ENCODE measurements at regions of chr3 and their contacts with region 1.

Region 1: DNA sequence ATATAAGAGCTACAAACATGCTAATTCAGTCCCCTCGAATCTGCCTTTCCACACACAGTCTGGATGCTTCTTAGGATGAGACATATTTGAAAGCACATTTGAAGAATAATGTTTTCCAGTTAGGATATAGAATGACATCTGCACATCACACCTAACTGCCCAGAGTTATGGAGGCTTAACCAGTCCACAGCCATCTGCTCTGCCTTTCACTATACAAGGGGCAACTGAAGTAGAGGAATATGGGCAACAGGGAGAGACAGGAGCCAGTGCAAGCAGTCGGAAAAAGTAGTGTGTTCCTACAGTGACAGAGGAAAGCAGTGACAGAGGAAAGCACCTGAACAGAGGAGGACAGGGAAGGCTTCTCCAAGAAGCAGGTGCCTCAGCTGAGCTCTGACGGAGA is 79.0 kb upstream of the CLDN18 start:
- DNase-seq: no peak
- ATAC-seq: no peak
- H3K4me3 ChIP-seq: no peak overlapping the region
- H3K4me3 Mint-ChIP-seq: no peak overlapping the region
- H3K27ac ChIP-seq: no peak overlapping the region
- H3K27ac Mint-ChIP-seq: no peak overlapping the region
- H3K4me1 ChIP-seq: no peaks in the 10 kb centered on the region
- H3K4me1 Mint-ChIP-seq: no peaks in the 10 kb centered on the region
- H3K27me3 ChIP-seq: no peaks in the 10 kb centered on the region
- H3K27me3 Mint-ChIP-seq: peaks cover 2 to 24% of the 10 kb centered on the region in 2 donors

Region 2: DNA sequence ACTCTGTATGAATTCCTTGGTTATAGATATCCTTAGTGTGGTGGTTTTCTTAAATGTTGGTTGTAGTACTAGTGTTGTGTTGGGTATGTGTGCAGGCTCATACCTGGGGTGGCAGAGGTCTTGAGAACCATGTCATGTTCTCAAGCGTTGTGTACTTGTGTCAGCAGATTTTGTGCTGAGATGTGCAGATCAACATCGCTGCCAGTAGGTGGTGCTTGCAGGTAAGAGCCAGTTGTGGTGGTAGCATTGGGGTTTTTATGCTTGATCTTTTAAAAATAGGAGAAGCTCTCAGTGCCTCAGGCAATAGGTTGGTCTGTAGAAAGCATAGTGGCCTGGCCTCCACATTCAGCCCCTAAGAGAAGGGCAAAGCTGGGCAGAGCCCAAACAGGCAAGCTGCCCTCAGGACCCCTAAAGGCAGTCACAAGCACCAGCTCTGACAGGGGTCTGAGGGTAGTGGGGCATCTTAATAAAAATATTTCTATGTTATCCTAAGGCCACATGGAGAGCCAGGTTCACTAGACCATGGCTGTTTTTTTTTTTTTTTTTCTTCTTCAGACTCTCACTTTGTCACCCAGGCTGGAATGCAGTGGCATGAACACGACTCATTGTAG is 809.2 kb before region 1 on chr3:
- CTCF ChIA-PET with region 1: interaction called in 1 of 2 experiments, 10 read pairs
- POLR2A ChIA-PET with region 1: no interaction called
- DNase-seq: peak in 6 of 35 experiments; percentile 1 to 31 (median 6)
- ATAC-seq: no peak
- H3K4me3 ChIP-seq: no peak overlapping the region
- H3K4me3 Mint-ChIP-seq: no peak overlapping the region
- H3K27ac ChIP-seq: no peak overlapping the region
- H3K27ac Mint-ChIP-seq: no peak overlapping the region
- H3K4me1 ChIP-seq: no peaks in the 10 kb centered on the region
- H3K4me1 Mint-ChIP-seq: no peaks in the 10 kb centered on the region
- H3K27me3 ChIP-seq: no peaks in the 10 kb centered on the region
- H3K27me3 Mint-ChIP-seq: peaks cover 2 to 11% of the 10 kb centered on the region in 2 donors

Region 3: GRCh38 chr3:137907641-137908032 is 23.3 kb before region 1 on chr3:
- CTCF ChIA-PET with region 1: no interaction called
- POLR2A ChIA-PET with region 1: no interaction called
- DNase-seq: no peak
- ATAC-seq: no peak
- H3K4me3 ChIP-seq: no peak overlapping the region
- H3K4me3 Mint-ChIP-seq: no peak overlapping the region
- H3K27ac ChIP-seq: no peak overlapping the region
- H3K27ac Mint-ChIP-seq: no peak overlapping the region
- H3K4me1 ChIP-seq: no peaks in the 10 kb centered on the region
- H3K4me1 Mint-ChIP-seq: no peaks in the 10 kb centered on the region
- H3K27me3 ChIP-seq: no peaks in the 10 kb centered on the region
- H3K27me3 Mint-ChIP-seq: peaks cover 0 to 3% of the 10 kb centered on the region in 2 donors

Region 4: DNA sequence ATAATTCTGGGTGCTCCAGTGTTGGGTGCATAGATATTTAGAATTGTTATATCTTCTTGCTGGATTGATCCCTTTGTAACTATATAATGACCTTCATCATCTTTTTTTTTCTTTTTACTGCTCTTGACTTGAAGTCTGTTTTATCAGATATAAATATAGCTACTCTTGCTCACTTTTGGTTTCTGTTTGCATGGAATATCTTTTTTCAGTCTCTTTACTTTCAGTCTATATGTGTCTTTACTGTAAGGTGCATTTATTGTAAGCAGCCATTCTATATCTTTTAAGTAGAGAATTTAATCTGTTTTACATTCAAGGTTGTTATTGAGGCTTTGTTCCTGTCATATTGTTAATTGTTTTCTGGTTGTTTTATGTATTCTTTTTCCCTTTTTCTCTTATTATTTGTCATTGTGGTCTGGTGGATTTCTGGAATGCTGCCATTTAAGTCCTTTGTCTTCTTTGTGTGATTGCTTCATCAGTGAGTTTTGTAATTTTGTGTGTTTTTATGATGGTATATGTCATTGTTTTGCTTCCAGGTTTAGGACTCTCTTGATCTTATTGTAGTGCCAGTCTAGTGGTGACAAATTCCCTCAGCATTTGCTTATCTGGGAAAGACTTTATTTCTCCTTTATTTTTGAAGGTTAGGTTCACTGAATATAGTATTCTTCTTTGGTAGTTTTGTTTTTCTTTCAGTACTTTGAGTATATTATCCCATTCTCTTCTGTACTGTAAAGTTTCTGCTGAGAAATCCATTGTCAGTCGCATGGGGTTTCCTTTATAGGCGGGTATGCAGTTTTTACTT is 1122.0 kb after region 1 on chr3:
- CTCF ChIA-PET with region 1: no interaction called
- POLR2A ChIA-PET with region 1: no interaction called
- DNase-seq: no peak
- ATAC-seq: no peak
- H3K4me3 ChIP-seq: no peak overlapping the region
- H3K4me3 Mint-ChIP-seq: no peak overlapping the region
- H3K27ac ChIP-seq: no peak overlapping the region
- H3K27ac Mint-ChIP-seq: no peak overlapping the region
- H3K4me1 ChIP-seq: no peaks in the 10 kb centered on the region
- H3K4me1 Mint-ChIP-seq: no peaks in the 10 kb centered on the region
- H3K27me3 ChIP-seq: no peaks in the 10 kb centered on the region
- H3K27me3 Mint-ChIP-seq: no peaks in the 10 kb centered on the region